Right cardiac atrium (tissue), 5 donors: ENCODE measurements at regions of chr4 and their contacts with region 1.

Region 1: GRCh38 chr4:24736066-24736465 is 59.3 kb upstream of the SOD3 start:
- DNase-seq: no peak
- ATAC-seq: no peak
- H3K4me3 ChIP-seq: no peak overlapping the region
- H3K27ac ChIP-seq: no peak overlapping the region
- H3K4me1 ChIP-seq: peaks cover 4% of the 10 kb centered on the region
- H3K27me3 ChIP-seq: no peaks in the 10 kb centered on the region

Region 2: DNA sequence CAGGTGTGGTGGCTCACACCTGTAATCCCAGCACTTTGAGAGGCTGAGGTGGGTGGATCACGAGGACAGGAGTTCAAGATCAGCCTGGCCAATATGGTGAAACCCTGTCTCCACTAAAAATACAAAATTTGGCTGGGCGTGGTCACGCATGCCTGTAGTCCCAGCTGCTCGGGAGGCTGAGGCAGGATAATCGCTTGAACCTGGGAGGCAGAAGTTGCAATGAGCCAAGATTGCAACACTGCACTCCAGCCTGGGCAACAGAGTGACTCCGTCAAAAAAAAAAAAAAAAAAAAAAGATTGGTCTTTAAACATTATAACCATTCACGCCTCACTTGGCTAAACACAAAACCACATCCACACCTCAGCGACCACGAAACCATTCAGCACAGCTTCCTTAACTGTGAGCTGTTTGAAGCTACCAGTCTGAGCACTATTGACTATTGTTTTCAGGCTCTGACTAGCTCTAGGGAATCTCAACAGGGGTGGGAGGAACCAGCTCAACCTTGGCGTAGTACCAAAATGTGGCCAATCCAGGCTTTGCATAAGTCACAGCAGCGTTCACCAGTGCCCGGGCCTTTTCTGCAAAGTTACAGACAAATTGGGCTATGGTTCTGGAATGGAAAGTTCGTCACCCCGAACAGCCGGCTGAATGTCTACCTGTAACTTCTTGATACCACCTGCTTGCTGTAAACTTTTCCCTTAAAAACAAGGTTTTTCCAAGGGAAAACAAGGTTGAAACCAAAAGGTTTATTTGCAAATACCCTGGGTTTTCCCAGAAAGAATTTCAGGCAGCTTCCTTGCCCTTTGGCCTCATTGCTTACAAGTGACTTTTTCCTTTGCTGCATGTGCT is 78.1 kb before region 1 on chr4:
- intact Hi-C with region 1: no loop called
- DNase-seq: peak; percentile 58 to 70 (median 59)
- ATAC-seq: peak; percentile 78 to 86
- H3K4me3 ChIP-seq: no peak overlapping the region
- H3K27ac ChIP-seq: no peak overlapping the region
- H3K4me1 ChIP-seq: peaks cover 1% of the 10 kb centered on the region
- H3K27me3 ChIP-seq: no peaks in the 10 kb centered on the region

Region 3: DNA sequence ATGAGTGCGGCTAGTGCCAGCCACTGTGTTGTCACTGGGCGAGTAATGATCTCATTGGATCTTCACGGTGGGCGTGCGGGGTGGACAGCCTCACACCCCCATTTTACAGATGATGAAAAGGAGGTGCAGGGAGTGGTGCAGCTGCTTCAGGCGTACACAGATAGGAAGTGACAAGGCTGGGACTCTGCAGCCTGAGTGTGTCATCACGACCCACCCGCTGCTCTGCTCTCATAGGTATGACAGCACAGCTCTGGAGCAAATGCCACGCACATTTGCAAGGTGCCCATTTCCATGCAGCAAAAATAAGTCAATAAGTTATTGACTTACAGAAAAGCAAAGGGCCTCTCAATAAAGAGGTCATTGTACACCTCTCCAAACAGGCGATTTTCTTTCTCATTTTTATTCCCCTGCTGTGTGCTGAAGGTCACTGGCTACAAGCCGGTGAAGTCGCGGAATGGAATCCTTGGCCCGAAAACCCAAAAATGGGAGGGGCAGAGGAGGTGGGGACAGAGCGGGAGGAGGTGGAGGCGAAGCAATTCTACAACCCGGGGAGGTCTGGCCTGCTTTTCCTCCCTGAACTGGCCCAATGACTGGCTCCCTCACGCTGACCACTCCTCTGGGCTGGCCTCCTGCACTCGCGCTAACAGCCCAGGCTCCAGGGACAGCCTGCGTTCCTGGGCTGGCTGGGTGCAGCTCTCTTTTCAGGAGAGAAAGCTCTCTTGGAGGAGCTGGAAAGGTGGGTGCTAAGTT is 59.0 kb after region 1 on chr4 and contains the start of gene SOD3:
- intact Hi-C with region 1: loop called in 1 of 4 experiments (anchors 10 kb)
- DNase-seq: peak; percentile 87 to 91 (median 91)
- ATAC-seq: peak; percentile 97 to 98
- H3K4me3 ChIP-seq: peak within 1 kb of the TSS; percentile 35
- H3K27ac ChIP-seq: peak within 1 kb of the TSS; percentile 86
- H3K4me1 ChIP-seq: peaks cover 3% of the 10 kb centered on the region
- H3K27me3 ChIP-seq: no peaks in the 10 kb centered on the region
- total RNA-seq, gene SOD3: 61.2 to 129 (median 80.9) TPM